Activated naive CD4-positive, alpha-beta T cell treated with anti-CD3 and anti-CD28 coated beads for 36 hours (primary cell): ENCODE measurements at regions of chr6 and their contacts with region 1.

Region 1: GRCh38 chr6:5260661-5261544 is at the starts of genes FARS2 and LYRM4:
- DNase-seq: peak; percentile 89
- H3K4me3 Mint-ChIP-seq: peak within 1 kb of the TSS; percentile 95
- H3K27ac Mint-ChIP-seq: peak within 1 kb of the TSS; percentile 99
- H3K4me1 Mint-ChIP-seq: peaks cover 28% of the 10 kb centered on the region
- H3K27me3 Mint-ChIP-seq: no peaks in the 10 kb centered on the region
- total RNA-seq, gene FARS2: 15.4 to 15.8 TPM
- total RNA-seq, gene LYRM4: 46.2 to 51.6 TPM

Region 2: GRCh38 chr6:5003604-5004372 is 257.1 kb before region 1 on chr6 and contains the start of gene RPP40:
- CTCF ChIA-PET with region 1: no interaction called
- intact Hi-C with region 1: loop called (anchors 1 kb)
- DNase-seq: peak; percentile 98
- H3K4me3 Mint-ChIP-seq: peak within 1 kb of the TSS; percentile 90
- H3K27ac Mint-ChIP-seq: peak within 1 kb of the TSS; percentile 91
- H3K4me1 Mint-ChIP-seq: peaks cover 11% of the 10 kb centered on the region
- H3K27me3 Mint-ChIP-seq: no peaks in the 10 kb centered on the region
- total RNA-seq, gene RPP40: 8.2 to 9.8 TPM

Region 3: DNA sequence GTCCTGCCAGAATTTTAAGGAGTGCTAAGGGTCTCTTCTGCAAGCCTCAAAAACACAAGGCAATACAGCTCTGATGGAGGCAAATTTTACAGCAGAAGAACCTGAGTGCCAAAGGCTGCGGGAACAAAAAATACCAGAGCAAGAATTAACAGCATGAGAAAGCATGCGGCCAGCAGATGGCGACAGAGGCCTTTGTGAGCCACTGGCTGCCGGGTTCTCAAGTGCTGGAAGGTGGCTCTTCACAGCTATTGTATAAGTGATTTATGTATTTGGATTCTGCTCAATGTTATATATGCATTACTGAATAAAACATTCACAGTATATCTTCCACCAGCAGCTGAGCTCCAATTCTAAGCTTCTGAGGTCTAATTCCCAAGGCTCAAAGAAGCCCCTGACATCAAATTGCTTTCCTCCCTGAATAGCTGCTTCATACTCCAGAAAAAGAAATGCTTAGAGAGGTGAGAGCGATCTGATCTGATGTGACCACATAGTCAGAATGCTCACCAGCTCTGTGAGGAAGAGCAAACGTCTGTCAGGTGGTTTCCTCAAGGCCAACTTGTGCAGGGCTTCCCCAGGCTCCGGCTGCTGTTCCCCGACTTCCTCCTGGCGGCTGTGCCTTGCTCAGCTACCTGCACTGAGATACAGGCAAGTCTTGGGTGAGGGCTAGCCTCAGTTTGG is 117.1 kb before region 1 on chr6:
- CTCF ChIA-PET with region 1: interaction called, 8 read pairs
- intact Hi-C with region 1: loop called (anchors 1 kb)
- DNase-seq: peak; percentile 92
- H3K4me3 Mint-ChIP-seq: no peak overlapping the region
- H3K27ac Mint-ChIP-seq: no peak overlapping the region
- H3K4me1 Mint-ChIP-seq: no peaks in the 10 kb centered on the region
- H3K27me3 Mint-ChIP-seq: no peaks in the 10 kb centered on the region

Region 4: DNA sequence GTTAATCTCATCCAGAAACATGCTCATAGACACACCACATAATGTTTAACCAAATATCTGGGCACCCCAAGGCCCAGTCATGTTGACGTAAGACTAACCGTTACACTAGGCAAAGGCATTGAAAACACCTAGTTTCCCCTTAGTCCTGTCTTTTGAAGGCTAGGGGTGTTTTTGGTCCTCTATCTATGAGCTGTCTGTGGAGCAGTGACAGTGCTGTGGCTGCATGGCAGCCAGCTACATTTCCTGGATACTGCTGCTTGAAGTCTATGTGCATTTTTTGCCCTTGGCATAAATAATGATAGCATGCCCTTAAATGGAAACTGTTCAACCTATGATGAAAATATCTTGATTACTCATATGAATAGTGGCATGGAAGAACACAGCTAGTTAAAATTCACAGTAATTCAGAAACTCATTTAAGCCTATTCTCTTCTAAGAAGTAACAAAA is 19.0 kb after region 1 on chr6:
- CTCF ChIA-PET with region 1: interaction called, 4 read pairs
- intact Hi-C with region 1: loop called (anchors 1 kb)
- DNase-seq: peak; percentile 69
- H3K4me3 Mint-ChIP-seq: no peak overlapping the region
- H3K27ac Mint-ChIP-seq: peak overlapping the region; percentile 83
- H3K4me1 Mint-ChIP-seq: peaks cover 37% of the 10 kb centered on the region
- H3K27me3 Mint-ChIP-seq: no peaks in the 10 kb centered on the region

Region 5: GRCh38 chr6:5302995-5303622 is 42.2 kb after region 1 on chr6:
- CTCF ChIA-PET with region 1: interaction called, 3 read pairs
- intact Hi-C with region 1: loop called (anchors 1 kb)
- DNase-seq: peak; percentile 73
- H3K4me3 Mint-ChIP-seq: no peak overlapping the region
- H3K27ac Mint-ChIP-seq: peak overlapping the region; percentile 59
- H3K4me1 Mint-ChIP-seq: peaks cover 36% of the 10 kb centered on the region
- H3K27me3 Mint-ChIP-seq: no peaks in the 10 kb centered on the region

Region 6: GRCh38 chr6:5337573-5337972 is 76.7 kb after region 1 on chr6:
- CTCF ChIA-PET with region 1: no interaction called
- intact Hi-C with region 1: no loop called
- DNase-seq: no peak
- H3K4me3 Mint-ChIP-seq: no peak overlapping the region
- H3K27ac Mint-ChIP-seq: no peak overlapping the region
- H3K4me1 Mint-ChIP-seq: peaks cover 23% of the 10 kb centered on the region
- H3K27me3 Mint-ChIP-seq: no peaks in the 10 kb centered on the region

Region 7: DNA sequence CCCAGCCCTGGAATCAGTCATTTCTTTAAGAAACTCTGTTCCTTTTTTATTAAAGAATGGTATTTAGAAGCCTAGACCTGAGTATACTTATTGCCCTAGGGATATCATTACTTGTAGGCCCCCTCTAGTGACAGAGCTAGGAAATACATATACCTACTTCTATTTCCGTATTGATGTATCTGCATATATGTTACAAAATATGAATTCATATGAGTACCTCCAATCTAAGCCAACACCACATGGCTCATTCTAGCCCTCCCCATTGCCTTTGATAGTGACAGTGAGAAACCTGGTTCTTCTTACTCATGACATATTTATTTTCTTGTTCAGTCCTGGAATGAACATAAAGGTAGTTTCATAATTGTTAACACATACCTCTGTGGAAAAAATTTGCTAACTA is 137.6 kb after region 1 on chr6:
- CTCF ChIA-PET with region 1: no interaction called
- intact Hi-C with region 1: loop called (anchors 1 kb)
- DNase-seq: peak; percentile 64
- H3K4me3 Mint-ChIP-seq: no peak overlapping the region
- H3K27ac Mint-ChIP-seq: no peak overlapping the region
- H3K4me1 Mint-ChIP-seq: peaks cover 22% of the 10 kb centered on the region
- H3K27me3 Mint-ChIP-seq: no peaks in the 10 kb centered on the region

Region 8: DNA sequence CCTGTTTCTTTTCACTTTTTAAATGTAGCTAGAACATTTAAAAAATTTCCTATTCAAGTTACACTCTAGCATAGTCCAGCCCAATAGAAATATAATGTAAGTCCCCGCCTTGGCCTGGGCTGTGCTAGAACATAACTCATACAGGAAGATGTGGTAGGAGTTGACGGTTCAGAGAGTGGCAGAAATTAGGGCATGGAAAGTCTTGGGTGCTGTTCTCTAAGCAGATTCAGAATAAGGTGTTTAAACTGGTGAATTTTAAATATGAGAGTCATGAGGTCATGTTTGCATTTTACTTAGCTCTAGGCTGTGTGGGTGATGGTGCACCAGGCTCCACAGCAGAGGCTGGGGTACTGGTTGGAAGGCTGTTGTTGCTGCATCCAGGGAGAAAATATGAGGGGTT is 256.9 kb after region 1 on chr6:
- CTCF ChIA-PET with region 1: no interaction called
- intact Hi-C with region 1: loop called (anchors 5 kb)
- DNase-seq: peak; percentile 72
- H3K4me3 Mint-ChIP-seq: no peak overlapping the region
- H3K27ac Mint-ChIP-seq: peak overlapping the region; percentile 53
- H3K4me1 Mint-ChIP-seq: peaks cover 60% of the 10 kb centered on the region
- H3K27me3 Mint-ChIP-seq: no peaks in the 10 kb centered on the region